IMR-90 (cell line): ENCODE measurements at regions of chr11 and their contacts with region 1.

Region 1: DNA sequence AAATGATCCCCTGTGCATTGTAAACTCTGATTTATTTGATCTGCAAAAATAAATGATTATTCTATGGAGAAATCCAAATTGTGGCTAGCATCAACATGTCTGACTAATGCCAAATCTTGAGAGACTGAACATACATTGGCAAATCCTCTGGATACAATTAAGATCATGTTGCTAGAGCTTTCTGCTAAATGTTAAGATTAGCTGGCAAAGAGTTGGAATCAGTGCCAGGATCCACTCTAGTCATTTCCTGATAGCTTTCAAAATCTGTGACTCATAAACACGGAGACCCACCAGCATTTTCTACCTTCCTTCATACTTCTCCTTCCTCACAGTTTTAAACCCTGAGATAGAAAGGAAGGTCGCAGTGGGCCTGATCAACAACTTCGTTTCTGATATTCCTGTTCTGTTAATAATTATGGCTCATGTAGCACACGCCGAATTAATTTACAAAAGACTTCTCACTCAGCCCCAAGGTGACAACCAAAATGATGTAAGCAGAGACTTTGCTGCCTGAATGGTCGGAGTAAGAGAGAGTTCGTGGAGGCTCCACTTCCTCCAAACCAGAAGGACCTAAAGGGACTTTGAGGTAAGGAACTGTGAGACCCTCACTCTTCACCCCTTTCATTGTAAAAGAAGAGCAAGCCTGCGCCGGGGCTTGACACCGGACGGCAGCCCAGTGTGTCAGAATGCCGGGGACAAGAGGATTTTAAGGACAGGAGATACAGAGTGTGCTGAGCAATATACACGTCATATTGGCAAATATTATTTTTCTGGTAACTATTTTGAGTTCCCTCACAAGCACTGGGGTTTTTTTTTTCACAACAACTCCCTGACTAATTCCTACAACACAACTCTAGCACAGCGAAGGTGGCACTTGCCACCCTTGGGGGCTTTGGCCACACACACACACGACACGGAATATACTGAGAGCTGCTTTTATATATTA is 42.0 kb downstream of the SERPINH1 start:
- DNase-seq: peak; percentile 96
- ATAC-seq: peak; percentile 71
- H3K4me3 ChIP-seq: no peak overlapping the region
- H3K27ac ChIP-seq: peak overlapping the region; percentile 72
- H3K4me1 ChIP-seq: peaks cover 15% of the 10 kb centered on the region
- H3K27me3 ChIP-seq: 0 out of 2 replicates have a peak, but pooled peaks cover under 1% of the 10 kb centered on the region
- CTCF ChIP-seq: no peak
- POLR2A ChIP-seq: 0 out of 2 replicates have a peak, but pooled peaks have one; percentile 45
- RAD21 ChIP-seq: peak; percentile 1; the same call in 1 of the 2 replicates

Region 2: GRCh38 chr11:75453916-75454655 is 150.0 kb before region 1 on chr11:
- CTCF ChIA-PET with region 1: no interaction called
- POLR2A ChIA-PET with region 1: no interaction called
- dilution Hi-C with region 1: no loop called
- in situ Hi-C with region 1: no loop called
- intact Hi-C with region 1: no loop called
- DNase-seq: peak; percentile 82
- ATAC-seq: peak; percentile 60
- H3K4me3 ChIP-seq: no peak overlapping the region
- H3K27ac ChIP-seq: no peak overlapping the region
- H3K4me1 ChIP-seq: peaks cover 7% of the 10 kb centered on the region
- H3K27me3 ChIP-seq: no peaks in the 10 kb centered on the region
- CTCF ChIP-seq: no peak
- POLR2A ChIP-seq: no peak
- RAD21 ChIP-seq: no peak

Region 3: GRCh38 chr11:75566763-75567279 is 37.2 kb before region 1 on chr11:
- CTCF ChIA-PET with region 1: no interaction called
- POLR2A ChIA-PET with region 1: no interaction called
- dilution Hi-C with region 1: no loop called
- in situ Hi-C with region 1: no loop called
- intact Hi-C with region 1: no loop called
- DNase-seq: no peak
- ATAC-seq: no peak
- H3K4me3 ChIP-seq: no peak overlapping the region
- H3K27ac ChIP-seq: no peak overlapping the region
- H3K4me1 ChIP-seq: peaks cover 19% of the 10 kb centered on the region
- H3K27me3 ChIP-seq: no peaks in the 10 kb centered on the region
- CTCF ChIP-seq: no peak
- POLR2A ChIP-seq: no peak
- RAD21 ChIP-seq: no peak

Region 4: GRCh38 chr11:75635066-75635862 is 31.2 kb after region 1 on chr11:
- CTCF ChIA-PET with region 1: no interaction called
- POLR2A ChIA-PET with region 1: no interaction called
- dilution Hi-C with region 1: no loop called
- in situ Hi-C with region 1: no loop called
- intact Hi-C with region 1: loop called (anchors 2 kb)
- DNase-seq: peak; percentile 72
- ATAC-seq: peak; percentile 87
- H3K4me3 ChIP-seq: no peak overlapping the region
- H3K27ac ChIP-seq: peak overlapping the region; percentile 39; the same call in 1 of the 2 replicates
- H3K4me1 ChIP-seq: peaks cover 8% of the 10 kb centered on the region
- H3K27me3 ChIP-seq: no peaks in the 10 kb centered on the region
- CTCF ChIP-seq: no peak
- POLR2A ChIP-seq: no peak
- RAD21 ChIP-seq: no peak

Region 5: GRCh38 chr11:75656044-75656727 is 52.1 kb after region 1 on chr11:
- CTCF ChIA-PET with region 1: no interaction called
- POLR2A ChIA-PET with region 1: no interaction called
- dilution Hi-C with region 1: no loop called
- in situ Hi-C with region 1: no loop called
- intact Hi-C with region 1: loop called (anchors 5 kb)
- DNase-seq: peak; percentile 4
- ATAC-seq: peak; percentile 47
- H3K4me3 ChIP-seq: no peak overlapping the region
- H3K27ac ChIP-seq: peak overlapping the region; percentile 93
- H3K4me1 ChIP-seq: peaks cover 21% of the 10 kb centered on the region
- H3K27me3 ChIP-seq: no peaks in the 10 kb centered on the region
- CTCF ChIP-seq: no peak
- POLR2A ChIP-seq: no peak
- RAD21 ChIP-seq: no peak

Region 6: GRCh38 chr11:75814686-75815344 is 210.8 kb after region 1 on chr11 and contains the start of gene UVRAG:
- CTCF ChIA-PET with region 1: no interaction called
- POLR2A ChIA-PET with region 1: no interaction called
- dilution Hi-C with region 1: no loop called
- in situ Hi-C with region 1: no loop called
- intact Hi-C with region 1: no loop called
- DNase-seq: peak; percentile 99
- ATAC-seq: peak; percentile 97
- H3K4me3 ChIP-seq: peak within 1 kb of the TSS; percentile 59
- H3K27ac ChIP-seq: peak within 1 kb of the TSS; percentile 47
- H3K4me1 ChIP-seq: peaks cover 8% of the 10 kb centered on the region
- H3K27me3 ChIP-seq: 0 out of 2 replicates have a peak, but pooled peaks cover 2% of the 10 kb centered on the region
- CTCF ChIP-seq: no peak
- POLR2A ChIP-seq: no peak; the same call in 1 of the 2 replicates
- RAD21 ChIP-seq: no peak
- total RNA-seq, gene UVRAG: 10.9 and 12.8 TPM in 2 replicates

Region 7: DNA sequence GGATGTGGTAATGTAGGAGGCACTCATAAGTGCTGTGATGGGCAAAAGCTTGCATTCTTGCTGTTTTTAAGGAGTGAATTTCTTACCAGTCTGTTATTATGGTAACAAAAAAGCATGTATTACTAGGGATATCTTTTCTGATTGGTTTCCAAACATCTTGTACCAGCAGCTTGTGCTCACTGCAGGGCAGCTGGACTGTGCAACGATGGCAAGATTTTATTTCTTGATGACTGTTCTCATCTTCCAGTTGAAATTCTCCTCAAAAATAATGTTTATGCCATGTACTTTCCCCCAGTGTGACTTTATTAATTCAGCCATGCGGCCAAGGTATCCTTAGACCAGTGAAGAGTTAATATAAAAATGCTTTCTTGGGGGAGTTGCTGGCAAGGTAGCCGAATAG is 876.2 kb after region 1 on chr11:
- CTCF ChIA-PET with region 1: no interaction called
- POLR2A ChIA-PET with region 1: no interaction called
- dilution Hi-C with region 1: no loop called
- in situ Hi-C with region 1: no loop called
- intact Hi-C with region 1: no loop called
- DNase-seq: no peak
- ATAC-seq: no peak
- H3K4me3 ChIP-seq: no peak overlapping the region
- H3K27ac ChIP-seq: no peak overlapping the region
- H3K4me1 ChIP-seq: no peaks in the 10 kb centered on the region
- H3K27me3 ChIP-seq: no peaks in the 10 kb centered on the region
- CTCF ChIP-seq: no peak
- POLR2A ChIP-seq: no peak
- RAD21 ChIP-seq: no peak